H1 (cell line): ENCODE measurements at regions of chr7 and their contacts with region 1.

Region 1: GRCh38 chr7:30983042-30983913 is 19.5 kb downstream of the GHRHR start:
- DNase-seq: peak; percentile 90 to 99
- H3K4me3 ChIP-seq: peak overlapping the region in 1 of 4 experiments; percentile 59; a peak in 1 of 8 replicates
- H3K27ac ChIP-seq: no peak overlapping the region
- H3K4me1 ChIP-seq: peaks cover 13 to 41% (median 30%) of the 10 kb centered on the region in 4 experiments
- H3K27me3 ChIP-seq: peaks cover 0 to 7% (median 2%) of the 10 kb centered on the region in 4 experiments; a peak in 3 of 7 replicates
- CTCF ChIP-seq: peak; percentile 94 to 99 (median 99)
- EP300 ChIP-seq: no peak
- POLR2A ChIP-seq: no peak
- RAD21 ChIP-seq: peak; percentile 96 to 97

Region 2: GRCh38 chr7:30708976-30709375 is 274.3 kb before region 1 on chr7:
- CTCF ChIA-PET with region 1: no interaction called
- POLR2A ChIA-PET with region 1: no interaction called
- DNase-seq: no peak
- H3K4me3 ChIP-seq: no peak overlapping the region
- H3K27ac ChIP-seq: no peak overlapping the region; the same call in 1 of the 2 replicates
- H3K4me1 ChIP-seq: no peaks in the 10 kb centered on the region; a peak in 2 of 7 replicates
- H3K27me3 ChIP-seq: no peaks in the 10 kb centered on the region
- CTCF ChIP-seq: no peak
- EP300 ChIP-seq: no peak
- POLR2A ChIP-seq: no peak
- RAD21 ChIP-seq: no peak

Region 3: GRCh38 chr7:30938435-30939316 is 44.6 kb before region 1 on chr7:
- CTCF ChIA-PET with region 1: interaction called, 309 read pairs
- POLR2A ChIA-PET with region 1: no interaction called
- DNase-seq: peak; percentile 91 to 98
- H3K4me3 ChIP-seq: peak overlapping the region in 3 of 4 experiments; percentile 31 to 52 (median 34); a peak in 6 of 8 replicates
- H3K27ac ChIP-seq: peak overlapping the region; percentile 23; the same call in 1 of the 2 replicates
- H3K4me1 ChIP-seq: peaks cover 0 to 5% (median 4%) of the 10 kb centered on the region in 4 experiments; a peak in 6 of 7 replicates
- H3K27me3 ChIP-seq: 0 out of 7 replicates have a peak, but pooled peaks cover 0 to 2% (median 0%) of the 10 kb centered on the region in 4 experiments
- CTCF ChIP-seq: peak; percentile 96 to 100 (median 99)
- EP300 ChIP-seq: no peak
- POLR2A ChIP-seq: peak in 1 of 2 experiments; percentile 62; a peak in 2 of 3 replicates
- RAD21 ChIP-seq: peak; percentile 72 to 76

Region 4: DNA sequence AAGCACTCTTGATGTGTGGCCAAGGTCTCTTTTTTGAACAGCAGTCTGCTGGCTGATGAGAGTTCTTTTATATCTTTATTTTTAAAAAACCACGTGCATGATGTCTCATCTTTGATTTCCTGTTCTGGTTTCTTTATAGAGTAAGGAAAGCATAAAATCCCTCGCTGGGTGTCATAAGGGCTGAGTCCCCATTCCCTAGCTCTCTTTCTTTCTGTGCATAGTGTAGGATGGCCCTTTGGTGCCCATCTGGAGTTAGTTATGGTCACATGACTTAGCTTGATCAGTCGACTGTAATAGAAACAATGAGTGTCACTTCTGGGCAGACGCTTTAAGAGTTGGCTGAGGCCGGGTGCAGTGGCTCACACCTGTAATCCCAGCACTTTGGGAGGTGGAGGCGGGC is 19.0 kb after region 1 on chr7:
- CTCF ChIA-PET with region 1: interaction called, 14 read pairs
- POLR2A ChIA-PET with region 1: interaction called, 7 read pairs
- DNase-seq: no peak
- H3K4me3 ChIP-seq: no peak overlapping the region
- H3K27ac ChIP-seq: no peak overlapping the region
- H3K4me1 ChIP-seq: 0 out of 7 replicates have a peak, but pooled peaks cover 0 to 3% (median 0%) of the 10 kb centered on the region in 4 experiments
- H3K27me3 ChIP-seq: no peaks in the 10 kb centered on the region
- CTCF ChIP-seq: no peak
- EP300 ChIP-seq: no peak
- POLR2A ChIP-seq: no peak
- RAD21 ChIP-seq: no peak

Region 5: GRCh38 chr7:31043051-31043471 is 59.8 kb after region 1 on chr7:
- CTCF ChIA-PET with region 1: interaction called, 108 read pairs
- POLR2A ChIA-PET with region 1: interaction called, 11 read pairs
- DNase-seq: peak in 1 of 2 experiments; percentile 67
- H3K4me3 ChIP-seq: peak overlapping the region in 1 of 4 experiments; percentile 20; a peak in 1 of 8 replicates
- H3K27ac ChIP-seq: no peak overlapping the region
- H3K4me1 ChIP-seq: peaks cover 2 to 12% (median 8%) of the 10 kb centered on the region in 4 experiments
- H3K27me3 ChIP-seq: peaks cover 0 to 7% (median 1%) of the 10 kb centered on the region in 4 experiments; a peak in 1 of 7 replicates
- CTCF ChIP-seq: no peak
- EP300 ChIP-seq: no peak
- POLR2A ChIP-seq: no peak
- RAD21 ChIP-seq: 0 out of 4 replicates have a peak, but pooled peaks of 1 of the 2 experiments have one; percentile 0

Region 6: GRCh38 chr7:31058122-31058521 is 74.8 kb after region 1 on chr7:
- CTCF ChIA-PET with region 1: interaction called, 218 read pairs
- POLR2A ChIA-PET with region 1: interaction called, 3 read pairs
- DNase-seq: no peak
- H3K4me3 ChIP-seq: no peak overlapping the region
- H3K27ac ChIP-seq: no peak overlapping the region
- H3K4me1 ChIP-seq: peaks cover 0 to 12% (median 8%) of the 10 kb centered on the region in 4 experiments; a peak in 5 of 7 replicates
- H3K27me3 ChIP-seq: peaks cover 3 to 12% (median 11%) of the 10 kb centered on the region in 4 experiments; a peak in 6 of 7 replicates
- CTCF ChIP-seq: no peak
- EP300 ChIP-seq: no peak
- POLR2A ChIP-seq: no peak
- RAD21 ChIP-seq: no peak

Region 7: DNA sequence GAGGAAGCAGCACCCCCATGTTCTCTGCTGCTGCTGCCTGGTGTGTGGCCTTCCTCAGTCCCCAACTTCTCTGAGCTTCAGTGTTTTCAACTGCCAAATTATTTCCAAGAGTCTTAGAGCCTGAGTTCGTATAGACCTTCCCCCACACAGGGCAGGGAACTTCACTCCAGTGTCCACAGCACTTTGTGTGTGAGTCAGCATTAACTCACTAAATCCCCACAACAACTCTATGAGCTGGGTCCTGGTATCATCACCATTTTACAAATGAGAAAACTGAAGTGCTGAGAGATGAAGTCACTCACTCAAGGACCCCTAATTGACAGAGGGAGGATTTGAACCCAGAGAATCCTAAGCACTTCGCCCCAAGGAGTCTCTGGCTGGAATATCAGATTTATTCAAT is 117.2 kb after region 1 on chr7:
- CTCF ChIA-PET with region 1: interaction called, 28 read pairs
- POLR2A ChIA-PET with region 1: interaction called, 4 read pairs
- DNase-seq: no peak
- H3K4me3 ChIP-seq: no peak overlapping the region
- H3K27ac ChIP-seq: no peak overlapping the region
- H3K4me1 ChIP-seq: no peaks in the 10 kb centered on the region
- H3K27me3 ChIP-seq: no peaks in the 10 kb centered on the region
- CTCF ChIP-seq: no peak
- EP300 ChIP-seq: no peak
- POLR2A ChIP-seq: no peak
- RAD21 ChIP-seq: no peak

Region 8: DNA sequence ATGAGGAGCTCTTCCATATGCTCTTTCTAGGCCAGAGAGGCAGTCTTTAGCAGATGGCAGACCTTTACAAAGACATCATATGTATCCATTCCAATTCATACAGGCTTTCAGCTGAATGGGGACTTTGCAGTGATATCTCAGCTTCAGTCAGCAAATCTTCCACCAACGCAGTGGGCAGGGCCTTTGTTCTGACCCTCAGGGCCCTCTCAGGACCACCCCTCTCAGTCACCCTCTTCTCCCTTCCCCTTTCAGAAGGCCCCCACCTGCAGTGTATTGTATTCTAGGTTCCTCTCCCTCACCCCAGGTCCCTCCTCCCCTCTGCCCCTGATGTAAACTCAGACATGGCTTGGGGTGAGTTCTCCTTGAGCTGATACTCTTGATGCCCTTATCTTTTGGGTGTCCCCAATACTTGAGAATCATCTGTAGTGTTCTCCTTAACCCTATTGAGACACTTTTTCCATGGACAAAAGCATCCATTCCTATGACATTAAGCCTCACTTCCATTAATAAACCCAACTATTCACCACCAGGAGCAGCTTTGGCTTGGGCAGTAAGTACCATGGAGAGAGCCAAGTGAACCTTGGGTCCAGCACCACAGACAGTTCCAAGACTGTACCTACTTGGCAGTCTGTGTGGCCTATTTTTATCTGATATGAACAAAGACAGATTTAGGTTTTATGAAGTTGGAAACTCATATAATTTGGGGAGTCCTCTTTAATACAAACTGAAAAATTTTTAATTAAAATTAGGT is 131.5 kb after region 1 on chr7:
- CTCF ChIA-PET with region 1: interaction called, 517 read pairs
- POLR2A ChIA-PET with region 1: interaction called, 3 read pairs
- DNase-seq: peak in 1 of 2 experiments; percentile 50
- H3K4me3 ChIP-seq: no peak overlapping the region
- H3K27ac ChIP-seq: no peak overlapping the region
- H3K4me1 ChIP-seq: peaks cover 0 to 3% (median 0%) of the 10 kb centered on the region in 4 experiments; a peak in 1 of 7 replicates
- H3K27me3 ChIP-seq: no peaks in the 10 kb centered on the region
- CTCF ChIP-seq: no peak
- EP300 ChIP-seq: no peak
- POLR2A ChIP-seq: no peak
- RAD21 ChIP-seq: no peak

Region 9: GRCh38 chr7:31251441-31251840 is 268.2 kb after region 1 on chr7:
- CTCF ChIA-PET with region 1: no interaction called
- POLR2A ChIA-PET with region 1: no interaction called
- DNase-seq: no peak
- H3K4me3 ChIP-seq: no peak overlapping the region
- H3K27ac ChIP-seq: no peak overlapping the region
- H3K4me1 ChIP-seq: peaks cover 0 to 6% (median 4%) of the 10 kb centered on the region in 4 experiments; a peak in 2 of 7 replicates
- H3K27me3 ChIP-seq: no peaks in the 10 kb centered on the region
- CTCF ChIP-seq: peak in 2 of 3 experiments; percentile 2 to 43; a peak in 3 of 4 replicates
- EP300 ChIP-seq: no peak
- POLR2A ChIP-seq: no peak
- RAD21 ChIP-seq: peak in 1 of 2 experiments; percentile 48; a peak in 3 of 4 replicates